ENCODE measurements at regions of chr5 and their contacts with region 1.

Region 1: GRCh38 chr5:134370871-134371833 is at the start of gene UBE2B:
- DNase-seq: peak; percentile 95
- ATAC-seq: peak; percentile 75
- H3K4me3 Mint-ChIP-seq: peak within 1 kb of the TSS; percentile 98
- H3K27ac Mint-ChIP-seq: peak within 1 kb of the TSS; percentile 100
- H3K4me1 Mint-ChIP-seq: peaks cover 54% of the 10 kb centered on the region
- H3K27me3 Mint-ChIP-seq: no peaks in the 10 kb centered on the region
- CTCF ChIP-seq: no peak
- total RNA-seq, gene UBE2B: 60.4 and 64.4 TPM in 2 replicates

Region 2: DNA sequence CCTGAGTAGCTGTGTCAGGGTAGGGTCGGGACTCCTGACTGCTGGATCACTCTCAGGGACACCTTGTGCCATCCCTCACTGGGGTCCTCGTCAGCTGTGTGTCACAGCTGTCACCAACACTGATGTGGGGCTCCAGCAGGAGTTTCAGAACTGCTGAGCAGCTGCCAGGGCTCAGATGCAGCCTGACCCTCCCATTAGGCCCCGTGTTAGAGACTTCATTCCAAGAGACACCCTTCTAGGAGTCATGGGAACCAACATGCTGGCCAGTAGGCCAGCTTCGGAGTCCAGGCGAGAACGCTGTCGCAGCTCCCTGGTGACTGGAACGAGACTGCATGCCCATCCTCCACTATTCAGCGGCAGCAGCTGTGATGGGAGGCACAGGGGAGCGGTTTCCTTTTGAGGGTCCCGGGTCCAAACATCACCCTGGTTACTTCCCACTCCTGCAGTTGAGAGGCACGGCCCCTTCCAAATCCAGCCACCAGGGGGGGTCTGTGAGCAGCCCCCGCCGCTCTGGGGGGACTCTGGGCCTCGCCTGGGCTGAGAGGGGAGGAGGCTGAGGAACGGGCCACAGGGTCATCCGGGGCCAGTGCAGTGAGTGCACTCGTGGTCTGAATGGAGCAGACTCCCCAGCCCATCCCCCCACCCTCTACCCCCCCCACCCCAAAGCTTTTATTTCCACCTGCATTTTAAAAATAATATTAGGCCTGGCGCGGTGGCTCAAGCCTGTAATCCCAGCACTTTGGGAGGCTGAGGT is 269.3 kb before region 1 on chr5:
- CTCF ChIA-PET with region 1: no interaction called
- POLR2A ChIA-PET with region 1: no interaction called
- intact Hi-C with region 1: loop called (anchors 5 kb)
- DNase-seq: peak; percentile 76
- ATAC-seq: peak; percentile 38
- H3K4me3 Mint-ChIP-seq: peak overlapping the region; percentile 32
- H3K27ac Mint-ChIP-seq: peak overlapping the region; percentile 99
- H3K4me1 Mint-ChIP-seq: peaks cover 56% of the 10 kb centered on the region
- H3K27me3 Mint-ChIP-seq: no peaks in the 10 kb centered on the region
- CTCF ChIP-seq: no peak

Region 3: DNA sequence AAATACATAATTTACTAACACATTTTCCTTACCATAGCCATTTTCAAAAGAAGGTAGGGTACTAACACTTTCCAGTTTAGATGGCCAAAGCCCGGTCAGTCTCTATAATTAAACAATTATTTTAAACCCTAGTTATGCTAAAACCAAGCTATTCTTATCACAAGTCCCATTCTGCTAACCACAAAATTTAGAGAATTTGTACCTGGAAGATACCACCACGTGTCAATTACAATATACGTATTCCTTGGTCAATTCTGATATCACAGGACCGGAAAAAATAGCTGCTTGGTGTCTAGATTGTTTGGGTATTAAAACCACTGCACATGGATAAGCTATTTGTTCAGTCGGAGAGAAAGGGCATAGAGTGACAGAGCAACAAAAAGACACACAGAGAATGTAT is 175.5 kb before region 1 on chr5:
- CTCF ChIA-PET with region 1: no interaction called
- POLR2A ChIA-PET with region 1: no interaction called
- intact Hi-C with region 1: no loop called
- DNase-seq: no peak
- ATAC-seq: no peak
- H3K4me3 Mint-ChIP-seq: no peak overlapping the region
- H3K27ac Mint-ChIP-seq: no peak overlapping the region
- H3K4me1 Mint-ChIP-seq: no peaks in the 10 kb centered on the region
- H3K27me3 Mint-ChIP-seq: no peaks in the 10 kb centered on the region
- CTCF ChIP-seq: no peak

Region 4: DNA sequence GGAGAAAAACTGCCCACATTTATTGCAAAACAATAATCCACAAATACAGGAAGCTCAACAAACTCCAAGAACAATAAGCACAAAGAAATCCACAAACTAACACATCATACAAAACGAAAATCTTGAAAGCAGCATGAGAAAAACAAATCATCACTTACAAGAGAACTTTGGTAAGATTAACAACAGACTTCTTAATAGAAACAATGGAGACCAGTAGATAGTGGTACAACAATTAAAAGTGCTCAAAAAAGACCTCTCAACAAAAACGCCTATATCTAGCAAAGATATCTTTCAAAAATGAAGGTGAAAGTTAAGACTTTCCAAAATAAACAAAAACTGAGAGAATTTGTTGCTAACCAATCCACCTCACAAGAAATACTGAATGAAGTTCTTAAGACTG is 42.5 kb before region 1 on chr5:
- CTCF ChIA-PET with region 1: no interaction called
- POLR2A ChIA-PET with region 1: no interaction called
- intact Hi-C with region 1: no loop called
- DNase-seq: no peak
- ATAC-seq: no peak
- H3K4me3 Mint-ChIP-seq: no peak overlapping the region
- H3K27ac Mint-ChIP-seq: no peak overlapping the region
- H3K4me1 Mint-ChIP-seq: no peaks in the 10 kb centered on the region
- H3K27me3 Mint-ChIP-seq: no peaks in the 10 kb centered on the region
- CTCF ChIP-seq: no peak

Region 5: GRCh38 chr5:134411546-134412266 is 40.6 kb after region 1 on chr5 and contains the start of gene CDKN2AIPNL:
- CTCF ChIA-PET with region 1: interaction called, 9 read pairs
- POLR2A ChIA-PET with region 1: interaction called, 20 read pairs
- intact Hi-C with region 1: loop called (anchors 1 kb)
- DNase-seq: peak; percentile 92
- ATAC-seq: peak; percentile 99
- H3K4me3 Mint-ChIP-seq: peak within 1 kb of the TSS; percentile 95
- H3K27ac Mint-ChIP-seq: peak within 1 kb of the TSS; percentile 85
- H3K4me1 Mint-ChIP-seq: peaks cover 31% of the 10 kb centered on the region
- H3K27me3 Mint-ChIP-seq: no peaks in the 10 kb centered on the region
- CTCF ChIP-seq: no peak
- total RNA-seq, gene CDKN2AIPNL: 21.6 and 22.4 TPM in 2 replicates

Region 6: DNA sequence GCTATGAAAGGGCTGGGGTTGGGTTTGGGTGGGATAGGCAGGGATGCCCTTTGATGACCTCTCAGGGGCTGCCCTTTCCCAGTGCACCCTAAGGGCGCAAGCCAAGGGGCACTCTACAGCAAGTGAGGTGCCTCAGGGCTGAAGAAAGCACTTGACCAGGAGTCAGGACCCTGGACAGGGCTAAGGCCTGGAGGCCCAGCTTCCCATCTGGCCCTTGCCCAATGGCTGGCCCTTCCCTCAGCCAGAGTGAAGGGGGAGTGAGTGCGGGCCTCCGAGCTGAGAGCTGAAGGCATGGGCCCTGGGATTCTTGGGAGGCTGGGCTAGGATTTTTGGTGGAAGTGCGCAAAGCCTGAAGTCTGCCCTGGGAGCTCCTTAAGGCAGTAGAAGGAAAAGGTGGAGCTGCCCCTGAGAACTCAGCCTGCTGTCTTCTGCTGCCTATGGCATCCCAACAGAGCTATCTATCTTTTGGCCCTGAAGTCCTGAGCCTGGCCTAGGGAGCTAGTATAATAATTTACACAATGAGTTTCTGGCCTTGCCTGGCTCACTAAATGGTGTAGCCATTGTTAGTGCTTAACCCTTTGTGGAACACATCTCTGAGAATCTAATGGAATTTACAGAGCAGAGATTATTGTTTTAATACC is 170.7 kb after region 1 on chr5:
- CTCF ChIA-PET with region 1: no interaction called
- POLR2A ChIA-PET with region 1: interaction called, 10 read pairs
- intact Hi-C with region 1: loop called (anchors 2 kb)
- DNase-seq: no peak
- ATAC-seq: no peak
- H3K4me3 Mint-ChIP-seq: peak overlapping the region; percentile 78
- H3K27ac Mint-ChIP-seq: peak overlapping the region; percentile 96
- H3K4me1 Mint-ChIP-seq: peaks cover 86% of the 10 kb centered on the region
- H3K27me3 Mint-ChIP-seq: no peaks in the 10 kb centered on the region
- CTCF ChIP-seq: no peak

Region 7: DNA sequence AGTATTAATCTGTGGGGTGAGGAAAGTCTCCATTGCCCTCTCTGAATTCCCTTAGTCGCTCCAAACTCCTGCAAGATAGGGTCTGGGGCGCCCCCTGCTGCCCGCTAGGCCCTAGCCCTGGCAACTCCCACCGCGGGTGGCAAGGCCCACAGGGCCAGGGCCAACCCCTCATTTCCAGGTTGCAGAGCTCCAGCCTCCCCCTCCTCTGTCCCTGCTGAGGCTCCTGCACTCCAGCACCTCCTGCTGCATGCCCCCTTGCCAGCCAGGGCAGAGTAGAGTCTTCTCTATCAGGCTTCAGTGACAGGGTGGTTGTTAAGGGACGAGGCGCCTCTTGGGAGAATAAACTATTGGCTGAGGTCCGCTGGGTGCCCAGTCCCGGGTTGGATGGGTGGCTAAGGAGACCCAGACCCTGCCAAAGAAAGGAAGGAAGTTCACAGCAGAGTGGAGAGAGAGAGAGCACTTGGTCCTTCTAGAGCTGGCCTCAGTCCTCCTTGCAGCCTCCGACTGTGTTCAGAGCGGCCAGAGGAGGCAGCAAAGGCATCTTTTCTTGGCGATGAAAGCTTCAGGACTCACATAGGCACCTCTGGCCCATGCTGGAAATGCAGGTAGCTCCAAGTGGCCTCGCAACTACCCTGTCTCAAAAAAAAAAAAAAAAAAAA is 215.8 kb after region 1 on chr5:
- CTCF ChIA-PET with region 1: interaction called, 11 read pairs
- POLR2A ChIA-PET with region 1: interaction called, 6 read pairs
- intact Hi-C with region 1: loop called (anchors 1 kb)
- DNase-seq: peak; percentile 79
- ATAC-seq: peak; percentile 91
- H3K4me3 Mint-ChIP-seq: peak overlapping the region; percentile 15
- H3K27ac Mint-ChIP-seq: no peak overlapping the region
- H3K4me1 Mint-ChIP-seq: peaks cover 18% of the 10 kb centered on the region
- H3K27me3 Mint-ChIP-seq: no peaks in the 10 kb centered on the region
- CTCF ChIP-seq: peak; percentile 20

Region 8: GRCh38 chr5:134600600-134600999 is 229.4 kb after region 1 on chr5:
- CTCF ChIA-PET with region 1: no interaction called
- POLR2A ChIA-PET with region 1: no interaction called
- intact Hi-C with region 1: no loop called
- DNase-seq: no peak
- ATAC-seq: no peak
- H3K4me3 Mint-ChIP-seq: no peak overlapping the region
- H3K27ac Mint-ChIP-seq: no peak overlapping the region
- H3K4me1 Mint-ChIP-seq: no peaks in the 10 kb centered on the region
- H3K27me3 Mint-ChIP-seq: no peaks in the 10 kb centered on the region
- CTCF ChIP-seq: no peak

Region 9: GRCh38 chr5:134738133-134738962 is 367.2 kb after region 1 on chr5 and contains the start of gene CAMLG:
- CTCF ChIA-PET with region 1: no interaction called
- POLR2A ChIA-PET with region 1: interaction called, 3 read pairs
- intact Hi-C with region 1: loop called (anchors 1 kb)
- DNase-seq: peak; percentile 94
- ATAC-seq: peak; percentile 97
- H3K4me3 Mint-ChIP-seq: peak within 1 kb of the TSS; percentile 86
- H3K27ac Mint-ChIP-seq: peak within 1 kb of the TSS; percentile 93
- H3K4me1 Mint-ChIP-seq: peaks cover 33% of the 10 kb centered on the region
- H3K27me3 Mint-ChIP-seq: no peaks in the 10 kb centered on the region
- CTCF ChIP-seq: no peak
- total RNA-seq, gene CAMLG: 22.2 and 23.9 TPM in 2 replicates

Region 10: GRCh38 chr5:134803821-134804220 is 432.7 kb after region 1 on chr5:
- CTCF ChIA-PET with region 1: no interaction called
- POLR2A ChIA-PET with region 1: no interaction called
- intact Hi-C with region 1: no loop called
- DNase-seq: no peak
- ATAC-seq: no peak
- H3K4me3 Mint-ChIP-seq: no peak overlapping the region
- H3K27ac Mint-ChIP-seq: no peak overlapping the region
- H3K4me1 Mint-ChIP-seq: no peaks in the 10 kb centered on the region
- H3K27me3 Mint-ChIP-seq: no peaks in the 10 kb centered on the region
- CTCF ChIP-seq: no peak

Region 11: GRCh38 chr5:134904630-134905245 is 533.6 kb after region 1 on chr5 and contains the start of gene PCBD2:
- CTCF ChIA-PET with region 1: no interaction called
- POLR2A ChIA-PET with region 1: interaction called, 3 read pairs
- intact Hi-C with region 1: loop called (anchors 5 kb)
- DNase-seq: peak; percentile 92
- ATAC-seq: peak; percentile 80
- H3K4me3 Mint-ChIP-seq: peak within 1 kb of the TSS; percentile 91
- H3K27ac Mint-ChIP-seq: peak within 1 kb of the TSS; percentile 96
- H3K4me1 Mint-ChIP-seq: peaks cover 37% of the 10 kb centered on the region
- H3K27me3 Mint-ChIP-seq: no peaks in the 10 kb centered on the region
- CTCF ChIP-seq: no peak
- total RNA-seq, gene PCBD2: 8.4 and 11.5 TPM in 2 replicates

Measured in activated B cell treated with CpG ODN at 0.5 μM for 24 hours (primary cell).